ENCODE measurements at regions of chr7 and their contacts with region 1.

Region 1: DNA sequence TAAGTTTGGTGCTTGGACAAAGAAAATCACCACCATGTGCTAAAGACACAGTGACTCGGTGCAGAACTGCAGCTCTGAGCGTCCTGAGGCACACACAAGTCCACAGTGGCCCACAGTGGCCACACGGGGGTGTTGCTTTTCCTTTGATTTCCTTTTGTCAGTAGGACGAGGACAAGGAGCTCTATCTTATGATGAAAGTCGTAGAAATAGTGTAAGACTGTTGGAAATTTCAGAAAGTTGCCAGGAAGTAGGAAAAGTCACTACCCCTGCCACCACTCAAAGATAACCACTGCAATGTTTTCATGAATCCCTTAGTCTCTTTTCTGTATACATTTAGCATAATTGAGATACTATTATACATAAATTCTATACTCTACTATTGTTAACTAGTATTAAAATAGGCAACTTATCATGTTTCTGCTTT is 146.0 kb downstream of the TNS3 start:
- DNase-seq: no peak
- ATAC-seq: peak; percentile 75 to 81
- H3K4me3 ChIP-seq: no peak overlapping the region
- H3K27ac ChIP-seq: no peak overlapping the region
- H3K4me1 ChIP-seq: peaks cover 5% of the 10 kb centered on the region
- H3K27me3 ChIP-seq: no peaks in the 10 kb centered on the region
- CTCF ChIP-seq: peak; percentile 71

Region 2: GRCh38 chr7:47807756-47808155 is 371.9 kb after region 1 on chr7:
- intact Hi-C with region 1: loop called (anchors 10 kb)
- DNase-seq: no peak
- ATAC-seq: peak in 1 of 2 donors; percentile 17
- H3K4me3 ChIP-seq: peak overlapping the region; percentile 32
- H3K27ac ChIP-seq: peak overlapping the region; percentile 66
- H3K4me1 ChIP-seq: peaks cover 41% of the 10 kb centered on the region
- H3K27me3 ChIP-seq: no peaks in the 10 kb centered on the region
- CTCF ChIP-seq: no peak

Measured in lower lobe of right lung (tissue), 2 donors.